Aorta (tissue), 5 donors: ENCODE measurements at regions of chrX and their contacts with region 1.

Region 1: GRCh38 chrX:110847334-110847733 is 51.7 kb upstream of the CHRDL1 start:
- DNase-seq: no peak
- ATAC-seq: peak; percentile 80
- H3K4me3 ChIP-seq: no peak overlapping the region
- H3K27ac ChIP-seq: no peak overlapping the region
- H3K4me1 ChIP-seq: no peaks in the 10 kb centered on the region
- H3K27me3 ChIP-seq: no peaks in the 10 kb centered on the region

Region 2: DNA sequence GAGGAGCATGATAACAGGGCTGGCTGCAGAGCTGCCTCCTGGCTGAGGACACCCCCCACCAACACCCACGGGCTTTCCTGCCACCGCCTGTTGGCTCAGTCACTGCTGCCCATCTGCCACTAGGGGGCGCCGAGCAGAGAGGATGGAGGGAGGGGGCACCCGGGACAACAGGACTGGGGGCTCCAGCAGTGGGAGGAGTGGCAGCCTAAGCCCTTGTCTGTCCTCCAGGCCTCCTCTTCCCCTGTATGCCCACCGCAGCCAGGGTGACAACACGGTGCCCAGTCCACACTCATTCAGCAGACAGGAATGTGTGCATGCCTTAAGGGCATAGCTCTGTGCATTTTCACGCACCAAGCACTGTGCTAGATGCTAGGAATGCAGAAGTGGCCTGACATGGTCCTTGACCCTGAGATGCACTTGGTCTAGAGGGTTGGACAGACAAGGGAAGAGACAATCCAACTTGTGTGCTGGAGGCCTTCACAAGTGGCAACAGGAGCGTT is 679.3 kb before region 1 on chrX:
- intact Hi-C with region 1: loop called in 1 of 2 experiments (anchors 10 kb)
- DNase-seq: no peak
- ATAC-seq: peak; percentile 33
- H3K4me3 ChIP-seq: no peak overlapping the region
- H3K27ac ChIP-seq: no peak overlapping the region
- H3K4me1 ChIP-seq: no peaks in the 10 kb centered on the region
- H3K27me3 ChIP-seq: no peaks in the 10 kb centered on the region

Region 3: DNA sequence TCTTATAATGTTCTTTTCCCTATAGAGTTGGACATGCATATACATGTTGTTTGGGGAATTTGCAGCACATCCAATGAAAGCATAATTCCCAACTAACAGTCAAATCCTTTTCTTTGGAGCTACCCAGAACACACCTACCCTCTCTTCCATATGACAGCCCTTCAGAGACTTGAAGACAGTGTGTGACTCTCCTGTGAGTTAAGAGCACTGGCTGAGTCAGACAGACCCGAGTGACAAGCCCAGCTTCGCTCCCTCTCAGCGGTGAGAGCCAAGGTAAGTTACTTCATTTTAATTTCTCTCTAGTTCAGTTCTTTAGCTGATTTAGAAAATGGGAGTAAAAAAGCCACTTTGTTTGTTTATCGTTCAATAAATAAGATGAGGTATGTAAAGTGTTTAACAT is 402.3 kb before region 1 on chrX:
- intact Hi-C with region 1: loop called (anchors 2 to 5 kb)
- DNase-seq: no peak
- ATAC-seq: no peak
- H3K4me3 ChIP-seq: no peak overlapping the region
- H3K27ac ChIP-seq: no peak overlapping the region
- H3K4me1 ChIP-seq: no peaks in the 10 kb centered on the region
- H3K27me3 ChIP-seq: no peaks in the 10 kb centered on the region

Region 4: GRCh38 chrX:110450050-110450449 is 397.3 kb before region 1 on chrX:
- intact Hi-C with region 1: loop called (anchors 2 to 5 kb)
- DNase-seq: peak; percentile 77 to 82
- ATAC-seq: peak; percentile 88
- H3K4me3 ChIP-seq: no peak overlapping the region
- H3K27ac ChIP-seq: no peak overlapping the region
- H3K4me1 ChIP-seq: no peaks in the 10 kb centered on the region
- H3K27me3 ChIP-seq: no peaks in the 10 kb centered on the region